Astrocyte of the cerebellum (primary cell): ENCODE measurements at regions of chr2 and their contacts with region 1.

Region 1: DNA sequence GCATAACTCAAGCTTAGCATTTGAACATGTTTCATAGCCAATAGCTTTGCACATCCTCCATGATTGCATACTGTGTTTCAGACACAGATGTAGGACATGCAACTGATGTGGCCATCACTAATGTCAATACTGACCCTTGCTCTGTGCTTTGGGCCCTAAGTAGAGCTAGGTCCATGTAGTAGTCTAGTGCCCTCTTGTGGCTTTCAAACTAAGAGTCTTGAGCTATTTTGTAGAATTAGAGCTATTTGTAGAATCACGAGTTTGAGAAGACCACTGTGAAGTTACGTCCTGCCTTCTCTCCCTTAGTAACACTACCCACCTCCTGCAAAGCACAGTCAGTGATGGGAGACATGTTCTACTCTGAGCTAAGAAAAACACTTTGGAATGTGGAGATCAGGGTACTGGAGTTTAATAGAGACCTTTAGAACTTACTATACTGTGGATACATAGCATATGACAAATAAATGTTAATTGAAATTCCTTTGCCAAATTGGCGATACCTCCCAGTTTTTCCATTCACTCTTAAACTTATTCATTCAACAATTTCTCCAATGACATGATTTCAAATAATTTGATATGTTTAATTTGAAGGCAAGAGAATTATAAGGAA is 306.5 kb upstream of the TNP1 start:
- DNase-seq: peak; percentile 13
- H3K4me3 ChIP-seq: no peak overlapping the region
- CTCF ChIP-seq: peak; percentile 54

Region 2: GRCh38 chr2:217510771-217511291 is 344.5 kb after region 1 on chr2:
- in situ Hi-C with region 1: loop called (anchors 25 kb)
- DNase-seq: peak; percentile 84
- H3K4me3 ChIP-seq: no peak overlapping the region
- CTCF ChIP-seq: peak; percentile 74